ENCODE measurements at regions of chr9 and their contacts with region 1.

Region 1: DNA sequence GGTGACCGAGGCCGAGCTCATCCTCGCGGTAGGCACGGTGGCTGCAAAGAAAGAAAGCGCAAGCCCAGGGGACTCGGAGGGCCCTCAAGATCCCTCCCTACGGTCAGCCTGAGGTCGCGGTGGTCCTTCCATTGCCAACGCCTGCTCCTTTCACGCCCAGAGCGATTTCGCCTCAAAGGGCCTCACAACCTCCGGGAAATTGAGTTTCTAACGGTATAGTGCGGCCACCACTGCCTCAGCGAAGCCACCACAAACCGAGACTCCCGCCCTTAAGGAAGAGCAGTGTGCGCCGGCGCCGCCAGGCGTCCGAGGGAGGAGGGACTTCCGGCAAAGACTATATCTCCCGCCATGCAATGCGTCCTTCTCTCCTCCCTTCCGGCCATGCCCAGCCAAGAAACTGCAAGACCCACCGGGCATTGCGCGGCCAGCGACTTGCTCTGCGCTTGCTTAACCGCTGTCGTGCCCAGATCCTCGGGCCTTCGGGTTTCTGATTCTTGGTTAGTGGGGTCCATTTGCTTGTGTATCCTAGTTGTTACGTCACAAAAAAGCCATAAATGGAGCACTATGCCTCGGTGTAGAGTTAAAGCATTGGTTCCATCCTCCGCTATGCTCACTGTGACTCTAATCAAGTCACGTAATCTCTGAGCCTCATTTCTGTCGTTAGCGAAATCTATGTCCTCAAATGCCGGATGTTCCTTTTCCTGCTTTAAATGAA is at the start of gene HAUS6:
- DNase-seq: peak; percentile 99
- H3K4me3 ChIP-seq: peak within 1 kb of the TSS; percentile 75 to 94 (median 87)
- H3K27ac ChIP-seq: peak within 1 kb of the TSS; percentile 85 to 96 (median 94)
- H3K4me1 ChIP-seq: peaks cover 10 to 42% (median 27%) of the 10 kb centered on the region in 6 donors
- H3K27me3 ChIP-seq: no peaks in the 10 kb centered on the region
- CTCF ChIP-seq: peak; percentile 56 to 95 (median 84)
- POLR2A ChIP-seq: no peak
- total RNA-seq, gene HAUS6: 10.1 to 13.5 (median 12.8) TPM

Region 2: DNA sequence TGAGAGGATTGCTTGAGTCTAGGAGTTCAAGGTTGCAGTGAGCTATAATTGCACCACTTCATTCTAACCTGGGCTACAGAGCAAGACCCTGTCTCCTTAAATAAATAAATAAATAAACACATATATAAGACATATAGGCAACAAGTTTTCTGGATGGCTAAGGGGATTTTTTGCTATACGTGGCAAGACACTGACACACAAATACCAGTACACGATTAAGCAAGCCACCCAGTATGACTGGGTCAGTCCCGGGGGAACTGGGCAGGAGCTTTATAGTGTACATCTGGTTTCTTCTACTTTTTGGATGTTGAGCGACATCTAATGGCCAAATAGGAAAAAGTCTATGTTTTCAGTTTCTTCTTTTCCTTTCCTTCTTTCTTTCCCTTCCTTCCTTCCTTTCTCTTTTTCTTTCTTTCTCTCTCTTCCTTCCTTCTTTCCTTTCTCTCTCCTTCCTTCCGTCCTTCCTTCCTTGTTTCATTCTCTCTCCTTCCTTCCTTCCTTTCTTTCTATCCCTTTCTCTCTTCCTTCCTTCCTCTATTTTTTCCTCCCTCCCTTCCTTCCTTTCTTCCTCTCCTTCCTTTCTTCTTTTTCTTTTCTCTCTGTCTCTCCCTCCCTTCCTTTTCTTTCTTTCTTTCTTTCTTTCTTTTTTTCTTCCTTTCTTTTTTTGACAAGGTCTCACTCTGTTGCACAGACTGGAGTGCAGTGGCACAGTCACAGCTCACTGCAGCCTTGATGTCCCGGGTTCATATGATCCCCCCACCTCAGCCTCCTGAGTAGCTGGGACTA is 71.5 kb after region 1 on chr9:
- intact Hi-C with region 1: loop called (anchors 10 kb)
- DNase-seq: no peak
- H3K4me3 ChIP-seq: no peak overlapping the region
- H3K27ac ChIP-seq: no peak overlapping the region
- H3K4me1 ChIP-seq: peaks cover 0 to 29% (median 15%) of the 10 kb centered on the region in 6 donors
- H3K27me3 ChIP-seq: no peaks in the 10 kb centered on the region
- CTCF ChIP-seq: peak; percentile 7 to 88 (median 59)
- POLR2A ChIP-seq: no peak